Heart left ventricle (tissue), 16 donors: ENCODE measurements at regions of chr21 and their contacts with region 1.

Region 1: GRCh38 chr21:27700974-27701614 is 734.2 kb upstream of the ADAMTS5 start:
- DNase-seq: peak; percentile 82 to 88 (median 82)
- ATAC-seq: peak; percentile 61 to 92 (median 88)
- H3K4me3 ChIP-seq: no peak overlapping the region
- H3K27ac ChIP-seq: no peak overlapping the region
- H3K4me1 ChIP-seq: peaks cover 0 to 8% (median 0%) of the 10 kb centered on the region in 12 donors
- H3K27me3 ChIP-seq: no peaks in the 10 kb centered on the region
- CTCF ChIP-seq: peak; percentile 72 to 97 (median 92)
- POLR2A ChIP-seq: no peak

Region 2: DNA sequence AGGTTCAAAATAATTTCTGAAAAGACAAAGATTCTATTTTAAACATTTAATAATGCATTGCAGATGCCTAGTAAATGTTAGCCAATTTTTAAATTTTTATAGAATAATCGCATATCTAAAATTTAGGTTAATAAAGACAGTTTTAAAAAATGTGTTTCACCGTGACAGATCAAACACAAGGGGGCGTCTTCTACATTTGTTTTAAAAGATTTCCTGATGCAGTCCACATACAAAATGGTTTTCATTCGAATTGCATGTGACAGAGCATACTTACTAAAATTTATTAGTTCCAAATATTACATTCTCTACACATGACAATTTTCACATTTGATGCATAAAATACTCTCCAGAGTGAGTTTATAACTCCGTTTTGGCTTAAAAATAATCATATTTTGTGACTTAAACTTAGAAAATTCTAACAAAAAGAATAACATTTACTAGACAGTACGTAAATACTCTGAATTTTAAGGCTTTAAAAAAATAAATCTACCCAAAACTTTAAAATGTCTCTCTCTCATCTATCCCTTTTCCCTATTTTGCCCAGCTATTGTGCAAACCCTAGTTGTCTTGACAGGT is 931.4 kb before region 1 on chr21:
- intact Hi-C with region 1: loop called in 8 of 10 experiments (anchors 5 to 10 kb)
- DNase-seq: no peak
- ATAC-seq: peak in 1 of 4 donors; percentile 42
- H3K4me3 ChIP-seq: no peak overlapping the region
- H3K27ac ChIP-seq: peak overlapping the region in 2 of 12 donors; percentile 0 to 7
- H3K4me1 ChIP-seq: peaks cover 0 to 3% (median 0%) of the 10 kb centered on the region in 12 donors
- H3K27me3 ChIP-seq: no peaks in the 10 kb centered on the region
- CTCF ChIP-seq: peak; percentile 57 to 76 (median 70)
- POLR2A ChIP-seq: no peak

Region 3: GRCh38 chr21:27564684-27565301 is 136.3 kb before region 1 on chr21:
- intact Hi-C with region 1: loop called in 6 of 10 experiments (anchors 2 to 10 kb)
- DNase-seq: peak in 4 of 5 donors; percentile 30 to 40 (median 38)
- ATAC-seq: peak in 3 of 4 donors; percentile 71 to 76 (median 76)
- H3K4me3 ChIP-seq: no peak overlapping the region
- H3K27ac ChIP-seq: no peak overlapping the region
- H3K4me1 ChIP-seq: peaks cover 0 to 3% (median 0%) of the 10 kb centered on the region in 12 donors
- H3K27me3 ChIP-seq: no peaks in the 10 kb centered on the region
- CTCF ChIP-seq: peak; percentile 58 to 92 (median 76)
- POLR2A ChIP-seq: no peak

Region 4: GRCh38 chr21:27722095-27722494 is 21.0 kb after region 1 on chr21:
- intact Hi-C with region 1: no loop called
- DNase-seq: no peak
- ATAC-seq: no peak
- H3K4me3 ChIP-seq: no peak overlapping the region
- H3K27ac ChIP-seq: no peak overlapping the region
- H3K4me1 ChIP-seq: no peaks in the 10 kb centered on the region
- H3K27me3 ChIP-seq: no peaks in the 10 kb centered on the region
- CTCF ChIP-seq: no peak
- POLR2A ChIP-seq: no peak

Region 5: DNA sequence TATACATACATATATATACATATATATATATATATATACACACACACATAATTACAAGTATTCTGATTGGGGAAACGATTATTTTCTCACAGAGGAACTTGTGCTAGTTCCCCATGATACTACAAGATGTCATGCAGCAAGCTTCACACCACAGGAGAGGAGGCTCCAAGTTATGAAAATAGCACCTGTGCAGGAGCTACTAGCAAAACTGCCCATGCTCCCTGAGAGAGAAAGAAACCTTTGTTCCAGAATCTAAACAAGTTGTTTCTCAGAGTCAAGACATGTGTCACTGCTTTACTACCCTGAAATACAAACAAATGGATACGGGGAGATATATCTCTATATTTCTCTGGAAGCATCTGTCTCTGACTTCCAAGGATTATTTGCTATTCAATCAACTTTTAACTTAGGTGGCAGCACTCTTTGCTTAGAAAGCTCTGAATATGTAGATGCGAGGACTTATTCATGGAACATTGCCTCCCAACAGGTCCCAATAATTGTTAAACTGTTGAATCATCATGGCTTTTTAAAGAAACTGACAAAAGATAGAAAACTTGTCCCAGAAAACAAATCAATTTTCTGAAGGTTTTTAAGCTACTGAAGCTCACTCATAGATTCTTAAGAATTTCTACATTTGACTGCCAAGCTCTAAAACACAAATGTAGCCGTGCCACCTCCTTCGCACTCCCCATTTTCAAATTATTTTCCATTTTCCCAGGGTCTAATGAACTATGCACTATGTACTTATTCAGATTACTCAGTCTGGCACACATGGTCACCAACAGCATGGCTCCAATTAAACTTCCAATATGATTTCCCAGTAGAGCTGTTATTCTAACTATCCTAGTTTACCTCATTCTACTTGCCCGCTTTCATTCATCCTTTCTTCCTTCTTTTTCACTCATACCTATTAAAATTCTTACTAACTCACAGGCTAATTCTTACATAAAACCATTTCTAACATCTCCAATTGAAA is 362.4 kb after region 1 on chr21:
- intact Hi-C with region 1: loop called in 3 of 10 experiments (anchors 10 kb)
- DNase-seq: no peak
- ATAC-seq: no peak
- H3K4me3 ChIP-seq: no peak overlapping the region
- H3K27ac ChIP-seq: no peak overlapping the region
- H3K4me1 ChIP-seq: peaks cover 0 to 28% (median 8%) of the 10 kb centered on the region in 12 donors
- H3K27me3 ChIP-seq: no peaks in the 10 kb centered on the region
- CTCF ChIP-seq: no peak
- POLR2A ChIP-seq: no peak

Region 6: GRCh38 chr21:28943631-28944030 is 1242.5 kb after region 1 on chr21:
- intact Hi-C with region 1: loop called in 1 of 10 experiments (anchors 5 kb)
- DNase-seq: no peak
- ATAC-seq: no peak
- H3K4me3 ChIP-seq: no peak overlapping the region
- H3K27ac ChIP-seq: no peak overlapping the region
- H3K4me1 ChIP-seq: peaks cover 0 to 8% (median 0%) of the 10 kb centered on the region in 12 donors
- H3K27me3 ChIP-seq: no peaks in the 10 kb centered on the region
- CTCF ChIP-seq: no peak
- POLR2A ChIP-seq: no peak